ENCODE measurements at regions of chr10 and their contacts with region 1.

Region 1: DNA sequence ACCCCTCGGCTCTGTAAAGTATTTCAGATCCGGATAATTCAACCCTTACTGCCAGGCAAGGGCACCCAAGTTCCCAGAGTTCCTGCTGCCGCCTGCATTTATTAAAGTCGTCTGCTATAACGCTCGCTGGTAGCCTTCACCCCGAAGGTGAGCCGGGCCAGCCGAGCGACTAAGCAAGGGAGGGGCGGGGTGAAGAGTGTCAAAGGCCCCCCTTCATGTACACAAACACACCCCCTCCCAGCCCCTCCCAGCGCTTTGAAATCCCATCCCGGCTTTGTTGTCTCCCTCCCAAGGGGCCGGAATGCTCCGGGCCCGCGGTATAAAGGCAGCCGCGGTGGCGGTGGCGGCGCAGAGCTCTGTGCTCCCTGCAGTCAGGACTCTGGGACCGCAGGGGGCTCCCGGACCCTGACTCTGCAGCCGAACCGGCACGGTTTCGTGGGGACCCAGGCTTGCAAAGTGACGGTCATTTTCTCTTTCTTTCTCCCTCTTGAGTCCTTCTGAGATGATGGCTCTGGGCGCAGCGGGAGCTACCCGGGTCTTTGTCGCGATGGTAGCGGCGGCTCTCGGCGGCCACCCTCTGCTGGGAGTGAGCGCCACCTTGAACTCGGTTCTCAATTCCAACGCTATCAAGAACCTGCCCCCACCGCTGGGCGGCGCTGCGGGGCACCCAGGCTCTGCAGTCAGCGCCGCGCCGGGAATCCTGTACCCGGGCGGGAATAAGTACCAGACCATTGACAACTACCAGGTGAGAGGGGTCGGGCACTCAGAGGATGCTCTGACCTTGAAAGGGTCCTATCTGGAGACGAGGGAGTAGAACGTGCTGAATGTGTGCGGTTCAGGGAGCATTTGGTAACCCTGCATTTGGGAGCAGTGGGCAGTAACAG is at the start of gene DKK1:
- DNase-seq: no peak
- ATAC-seq: peak; percentile 75
- H3K4me3 ChIP-seq: peak within 1 kb of the TSS; percentile 91 to 97
- H3K27ac ChIP-seq: peak within 1 kb of the TSS; percentile 100
- H3K4me1 ChIP-seq: peaks cover 53% of the 10 kb centered on the region
- H3K27me3 ChIP-seq: no peaks in the 10 kb centered on the region
- CTCF ChIP-seq: peak; percentile 99
- total RNA-seq, gene DKK1: 563 TPM

Region 2: GRCh38 chr10:52443419-52444388 is 129.5 kb after region 1 on chr10:
- CTCF ChIA-PET with region 1: interaction called, 3 read pairs
- POLR2A ChIA-PET with region 1: no interaction called
- in situ Hi-C with region 1: no loop called
- intact Hi-C with region 1: loop called (anchors 1 kb)
- DNase-seq: peak; percentile 86
- ATAC-seq: peak; percentile 93
- H3K4me3 ChIP-seq: no peak overlapping the region
- H3K27ac ChIP-seq: peak overlapping the region; percentile 98
- H3K4me1 ChIP-seq: peaks cover 23% of the 10 kb centered on the region
- H3K27me3 ChIP-seq: no peaks in the 10 kb centered on the region
- CTCF ChIP-seq: no peak